Ovary (tissue), 10 donors: ENCODE measurements at regions of chrX and their contacts with region 1.

Region 1: GRCh38 chrX:87788976-87789375 is 271.4 kb downstream of the KLHL4 start:
- DNase-seq: no peak
- H3K4me3 ChIP-seq: no peak overlapping the region
- H3K27ac ChIP-seq: no peak overlapping the region
- H3K4me1 ChIP-seq: no peaks in the 10 kb centered on the region
- H3K27me3 ChIP-seq: no peaks in the 10 kb centered on the region
- CTCF ChIP-seq: no peak
- EP300 ChIP-seq: no peak
- POLR2A ChIP-seq: no peak

Region 2: DNA sequence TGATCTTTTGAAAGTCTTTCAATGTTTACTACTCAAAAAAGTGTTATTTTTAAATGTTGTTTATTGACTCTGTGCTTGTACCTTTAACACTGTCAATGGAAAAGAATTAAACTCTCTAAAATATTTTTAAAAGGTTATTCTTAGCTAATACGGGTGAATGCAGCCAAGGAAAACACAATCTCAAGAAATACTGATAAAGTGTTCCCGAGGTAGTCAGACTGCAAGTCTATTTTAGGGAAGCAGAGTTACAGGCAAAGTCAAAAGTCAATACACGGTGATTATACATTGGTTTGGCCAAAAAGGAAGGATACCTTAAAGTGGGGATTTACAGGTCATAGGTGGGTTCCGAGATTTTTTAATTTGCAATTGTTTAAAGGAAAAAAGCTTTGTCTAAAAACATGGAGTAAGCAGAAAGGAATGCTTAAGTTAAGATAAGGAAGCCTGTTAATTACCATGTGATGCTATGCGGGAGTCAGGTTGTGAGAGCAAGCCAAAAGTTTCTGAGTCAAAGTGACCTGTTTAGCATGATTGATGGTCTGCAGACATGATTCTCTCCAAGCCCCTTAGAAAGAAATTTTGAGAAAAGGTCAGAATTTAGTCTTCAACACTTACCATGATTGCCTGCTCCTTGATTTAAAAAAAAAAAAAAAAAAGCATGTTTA is 17.0 kb after region 1 on chrX:
- intact Hi-C with region 1: loop called in 1 of 4 experiments (anchors 1 kb)
- DNase-seq: peak in 1 of 5 donors; percentile 20
- H3K4me3 ChIP-seq: no peak overlapping the region
- H3K27ac ChIP-seq: peak overlapping the region in 1 of 2 donors; percentile 38
- H3K4me1 ChIP-seq: peaks cover 1% of the 10 kb centered on the region
- H3K27me3 ChIP-seq: no peaks in the 10 kb centered on the region
- CTCF ChIP-seq: no peak
- EP300 ChIP-seq: no peak
- POLR2A ChIP-seq: no peak

Region 3: GRCh38 chrX:87878926-87879325 is 90.0 kb after region 1 on chrX:
- intact Hi-C with region 1: no loop called
- DNase-seq: no peak
- H3K4me3 ChIP-seq: no peak overlapping the region
- H3K27ac ChIP-seq: no peak overlapping the region
- H3K4me1 ChIP-seq: no peaks in the 10 kb centered on the region
- H3K27me3 ChIP-seq: no peaks in the 10 kb centered on the region
- CTCF ChIP-seq: no peak
- EP300 ChIP-seq: no peak
- POLR2A ChIP-seq: no peak

Region 4: DNA sequence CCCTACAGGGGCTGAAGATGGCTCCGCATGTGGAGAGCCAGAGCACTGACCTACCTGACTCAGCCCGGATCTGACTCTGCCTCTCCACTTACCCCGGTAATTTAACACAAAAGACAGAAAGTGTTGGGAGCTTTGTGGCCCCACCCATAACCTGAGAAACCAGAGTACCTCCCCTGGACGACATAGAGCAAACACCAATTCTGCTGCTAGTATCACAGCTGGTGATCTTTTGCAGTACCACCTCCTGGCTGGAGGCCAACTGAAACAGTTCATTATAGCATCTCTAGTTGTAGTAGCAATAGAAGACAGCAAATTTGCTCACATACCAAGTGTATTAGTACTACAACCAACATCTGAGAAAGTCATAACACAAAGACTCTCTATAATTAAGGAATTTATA is 172.5 kb after region 1 on chrX:
- intact Hi-C with region 1: no loop called
- DNase-seq: no peak
- H3K4me3 ChIP-seq: no peak overlapping the region
- H3K27ac ChIP-seq: no peak overlapping the region
- H3K4me1 ChIP-seq: no peaks in the 10 kb centered on the region
- H3K27me3 ChIP-seq: no peaks in the 10 kb centered on the region
- CTCF ChIP-seq: no peak
- EP300 ChIP-seq: no peak
- POLR2A ChIP-seq: no peak

Region 5: DNA sequence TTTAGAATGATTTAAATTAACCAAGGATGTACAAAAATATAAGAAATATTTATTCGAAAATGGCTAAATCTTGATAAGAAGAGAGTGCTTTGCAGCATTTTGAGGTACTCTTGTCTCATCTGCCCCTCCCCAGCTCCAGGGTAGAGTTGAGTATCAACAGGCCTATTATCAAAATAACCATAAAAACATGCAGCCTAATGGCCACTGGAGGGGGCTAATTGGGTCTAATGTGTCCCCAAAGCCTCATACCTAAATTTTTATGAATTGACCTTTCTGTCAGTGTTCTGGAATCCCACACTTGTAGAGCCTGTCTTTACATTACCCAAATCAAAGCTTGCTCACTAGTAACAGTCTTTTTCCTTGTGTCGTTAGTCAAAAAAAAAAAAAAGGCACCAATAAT is 413.2 kb after region 1 on chrX:
- intact Hi-C with region 1: no loop called
- DNase-seq: no peak
- H3K4me3 ChIP-seq: no peak overlapping the region
- H3K27ac ChIP-seq: no peak overlapping the region
- H3K4me1 ChIP-seq: no peaks in the 10 kb centered on the region
- H3K27me3 ChIP-seq: no peaks in the 10 kb centered on the region
- CTCF ChIP-seq: no peak
- EP300 ChIP-seq: no peak
- POLR2A ChIP-seq: no peak

Region 6: GRCh38 chrX:88584283-88584682 is 795.3 kb after region 1 on chrX:
- intact Hi-C with region 1: loop called in 1 of 4 experiments (anchors 10 kb)
- DNase-seq: no peak
- H3K4me3 ChIP-seq: no peak overlapping the region
- H3K27ac ChIP-seq: no peak overlapping the region
- H3K4me1 ChIP-seq: no peaks in the 10 kb centered on the region
- H3K27me3 ChIP-seq: no peaks in the 10 kb centered on the region
- CTCF ChIP-seq: no peak
- EP300 ChIP-seq: no peak
- POLR2A ChIP-seq: no peak